Endothelial cell of umbilical vein (primary cell): ENCODE measurements at regions of chr9 and their contacts with region 1.

Region 1: GRCh38 chr9:121861501-121862180 is 210.2 kb downstream of the DAB2IP start:
- DNase-seq: peak; percentile 32
- H3K4me3 ChIP-seq: no peak overlapping the region
- H3K27ac ChIP-seq: no peak overlapping the region
- H3K4me1 ChIP-seq: peaks cover 6% of the 10 kb centered on the region
- H3K27me3 ChIP-seq: no peaks in the 10 kb centered on the region
- CTCF ChIP-seq: peak; percentile 46 to 53
- POLR2A ChIP-seq: no peak

Region 2: DNA sequence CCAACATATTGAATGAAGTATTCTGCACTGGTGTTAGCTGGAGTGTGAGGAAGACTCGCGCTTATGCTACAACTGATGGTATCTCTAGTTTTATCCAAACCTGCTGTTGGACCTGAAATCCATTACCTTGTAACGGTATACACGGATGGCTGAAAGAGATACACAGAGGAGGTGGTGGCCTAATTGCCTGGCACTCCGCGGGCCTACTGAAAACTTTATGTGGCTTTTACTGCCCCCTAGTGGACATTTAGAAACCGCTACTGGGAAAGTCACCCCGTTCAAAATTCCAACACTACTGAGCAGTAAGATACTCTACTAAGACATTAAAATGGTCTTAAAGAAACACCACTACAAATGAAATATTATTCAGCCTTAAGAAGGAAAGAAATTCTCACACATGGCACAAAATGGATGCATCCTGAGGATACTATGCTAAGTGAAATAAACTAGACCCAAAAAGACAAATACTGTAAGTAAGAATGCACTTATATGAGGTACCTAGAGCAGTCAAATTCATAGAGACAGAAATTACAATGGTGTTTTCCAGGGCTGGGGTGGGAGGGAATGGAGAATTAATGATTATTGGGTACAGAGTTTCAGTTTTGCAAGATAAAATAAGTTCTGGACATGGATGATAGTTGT is 131.1 kb after region 1 on chr9:
- CTCF ChIA-PET with region 1: interaction called, 3 read pairs
- POLR2A ChIA-PET with region 1: no interaction called
- dilution Hi-C with region 1: no loop called
- intact Hi-C with region 1: loop called (anchors 1 kb)
- DNase-seq: peak; percentile 74
- H3K4me3 ChIP-seq: no peak overlapping the region
- H3K27ac ChIP-seq: no peak overlapping the region
- H3K4me1 ChIP-seq: peaks cover 5% of the 10 kb centered on the region
- H3K27me3 ChIP-seq: no peaks in the 10 kb centered on the region
- CTCF ChIP-seq: peak; percentile 58 to 68
- POLR2A ChIP-seq: no peak

Region 3: GRCh38 chr9:122370869-122371755 is 509.5 kb after region 1 on chr9 and contains the start of gene PTGS1:
- CTCF ChIA-PET with region 1: no interaction called
- POLR2A ChIA-PET with region 1: no interaction called
- dilution Hi-C with region 1: no loop called
- intact Hi-C with region 1: no loop called
- DNase-seq: peak; percentile 43
- H3K4me3 ChIP-seq: peak within 1 kb of the TSS; percentile 42 to 49 (median 48)
- H3K27ac ChIP-seq: no peak within 1 kb of the TSS
- H3K4me1 ChIP-seq: peaks cover 22% of the 10 kb centered on the region
- H3K27me3 ChIP-seq: no peaks in the 10 kb centered on the region
- CTCF ChIP-seq: no peak
- POLR2A ChIP-seq: peak; percentile 50
- total RNA-seq, gene PTGS1: 14.6 and 45.2 TPM in 2 replicates